WTC11 (cell line): ENCODE measurements at regions of chr16 and their contacts with region 1.

Region 1: GRCh38 chr16:67284699-67285646 is 5.6 kb downstream of the PLEKHG4 start:
- DNase-seq: peak; percentile 84
- ATAC-seq: peak; percentile 94
- H3K4me3 Mint-ChIP-seq: no peak overlapping the region
- H3K27ac Mint-ChIP-seq: no peak overlapping the region
- H3K4me1 Mint-ChIP-seq: no peaks in the 10 kb centered on the region
- H3K27me3 Mint-ChIP-seq: peaks cover 9% of the 10 kb centered on the region
- CTCF ChIP-seq: peak; percentile 58

Region 2: GRCh38 chr16:67198238-67198734 is 86.7 kb before region 1 on chr16:
- CTCF ChIA-PET with region 1: interaction called, 21 read pairs
- POLR2A ChIA-PET with region 1: no interaction called
- DNase-seq: peak; percentile 53
- ATAC-seq: peak; percentile 13
- H3K4me3 Mint-ChIP-seq: peak overlapping the region; percentile 55
- H3K27ac Mint-ChIP-seq: peak overlapping the region; percentile 85; the same call in 1 of the 2 replicates
- H3K4me1 Mint-ChIP-seq: peaks cover 13% of the 10 kb centered on the region
- H3K27me3 Mint-ChIP-seq: no peaks in the 10 kb centered on the region
- CTCF ChIP-seq: no peak

Region 3: DNA sequence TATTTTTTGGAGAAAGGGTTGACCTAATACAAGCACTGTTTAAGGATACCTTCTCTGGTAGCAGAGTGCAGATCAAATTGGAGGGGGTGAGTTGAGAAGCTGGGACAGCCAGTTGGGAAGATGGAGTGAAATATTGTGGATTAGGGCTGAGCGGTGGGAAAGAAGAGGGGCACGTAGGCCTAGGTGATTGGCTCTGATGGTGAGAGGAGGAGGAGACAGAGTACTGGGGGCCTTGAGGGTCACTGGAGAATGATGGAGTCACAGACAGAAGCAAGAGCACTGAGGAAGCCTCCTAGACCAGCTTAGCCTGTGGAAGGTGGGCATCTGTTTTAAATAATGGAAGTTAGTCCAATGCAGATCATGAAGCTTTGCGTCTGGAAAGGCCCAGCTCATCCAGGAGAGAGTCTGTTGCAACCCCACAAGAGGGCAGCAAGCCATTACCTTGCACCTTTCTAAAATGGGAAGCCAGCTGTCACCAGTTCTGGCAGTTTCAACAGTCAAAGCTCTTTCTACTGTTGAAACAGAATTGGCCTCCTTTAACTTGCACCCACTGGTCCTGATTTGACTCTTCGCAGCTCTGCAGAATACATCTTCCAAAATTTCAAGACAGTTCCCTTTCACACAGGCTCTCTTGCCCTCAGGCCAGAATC is 24.4 kb before region 1 on chr16:
- CTCF ChIA-PET with region 1: interaction called, 92 read pairs
- POLR2A ChIA-PET with region 1: no interaction called
- DNase-seq: no peak
- ATAC-seq: peak; percentile 67
- H3K4me3 Mint-ChIP-seq: no peak overlapping the region
- H3K27ac Mint-ChIP-seq: no peak overlapping the region
- H3K4me1 Mint-ChIP-seq: peaks cover 4% of the 10 kb centered on the region; the same call in 1 of the 2 replicates
- H3K27me3 Mint-ChIP-seq: no peaks in the 10 kb centered on the region
- CTCF ChIP-seq: no peak

Region 4: GRCh38 chr16:67326472-67327309 is 41.7 kb after region 1 on chr16 and contains the starts of genes KCTD19 and LRRC36:
- CTCF ChIA-PET with region 1: interaction called, 40 read pairs
- POLR2A ChIA-PET with region 1: no interaction called
- DNase-seq: peak; percentile 98
- ATAC-seq: peak; percentile 99
- H3K4me3 Mint-ChIP-seq: peak within 1 kb of the TSS; percentile 83
- H3K27ac Mint-ChIP-seq: no peak within 1 kb of the TSS
- H3K4me1 Mint-ChIP-seq: peaks cover 3% of the 10 kb centered on the region
- H3K27me3 Mint-ChIP-seq: peaks cover 56% of the 10 kb centered on the region
- CTCF ChIP-seq: peak; percentile 49
- total RNA-seq, gene KCTD19: 0.85 to 1.1 TPM (median 0.85 TPM) in 3 replicates
- total RNA-seq, gene LRRC36: 0.13 to 0.39 TPM (median 0.18 TPM) in 3 replicates

Region 5: GRCh38 chr16:67399181-67399733 is 114.3 kb after region 1 on chr16:
- CTCF ChIA-PET with region 1: interaction called, 36 read pairs
- POLR2A ChIA-PET with region 1: interaction called, 3 read pairs
- DNase-seq: peak; percentile 90
- ATAC-seq: peak; percentile 83
- H3K4me3 Mint-ChIP-seq: no peak overlapping the region
- H3K27ac Mint-ChIP-seq: no peak overlapping the region
- H3K4me1 Mint-ChIP-seq: peaks cover 26% of the 10 kb centered on the region
- H3K27me3 Mint-ChIP-seq: peaks cover 44% of the 10 kb centered on the region
- CTCF ChIP-seq: peak; percentile 80; the same call in 1 of the 2 replicates

Region 6: DNA sequence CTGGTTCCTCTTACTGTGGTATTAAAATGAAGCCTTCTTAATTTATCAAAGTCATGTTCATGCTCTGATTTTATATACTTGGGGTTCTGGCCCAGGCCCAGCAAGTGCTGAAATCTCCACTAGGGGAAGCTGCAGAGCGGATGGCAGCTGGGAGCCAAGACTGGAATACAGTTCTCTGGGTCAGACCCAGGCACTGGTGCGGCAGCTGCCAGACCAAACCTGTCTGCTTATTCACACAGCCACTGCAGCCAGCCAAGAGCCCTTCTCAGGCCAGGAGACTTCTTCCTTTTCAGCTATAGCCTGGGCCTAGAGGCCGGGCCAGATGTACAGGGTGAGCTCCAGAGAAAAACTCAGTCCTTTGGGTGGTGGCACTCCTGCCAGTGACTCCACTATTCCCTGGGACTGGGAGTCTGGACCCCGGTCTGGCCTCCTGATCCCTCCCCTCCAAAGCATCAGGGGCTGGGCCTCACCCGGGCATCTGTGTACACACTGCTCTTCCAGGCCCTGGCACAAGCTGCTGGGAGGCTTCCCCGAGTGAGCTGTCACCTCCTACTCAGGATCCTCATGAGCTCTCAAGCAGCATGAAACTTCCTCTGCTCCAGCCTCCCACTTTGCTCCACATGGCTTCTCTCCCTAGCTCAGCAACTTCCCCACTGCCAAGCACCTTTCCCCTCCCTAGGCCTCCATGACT is 171.6 kb after region 1 on chr16:
- CTCF ChIA-PET with region 1: interaction called, 10 read pairs
- POLR2A ChIA-PET with region 1: no interaction called
- DNase-seq: peak; percentile 61
- ATAC-seq: peak; percentile 83
- H3K4me3 Mint-ChIP-seq: no peak overlapping the region
- H3K27ac Mint-ChIP-seq: peak overlapping the region; percentile 46; the same call in 1 of the 2 replicates
- H3K4me1 Mint-ChIP-seq: 0 out of 2 replicates have a peak, but pooled peaks cover 5% of the 10 kb centered on the region
- H3K27me3 Mint-ChIP-seq: no peaks in the 10 kb centered on the region
- CTCF ChIP-seq: peak; percentile 44